CD4-positive, alpha-beta T cell (primary cell): ENCODE measurements at regions of chr2 and their contacts with region 1.

Region 1: GRCh38 chr2:148509288-148509902 is 135.2 kb upstream of the EPC2 start:
- DNase-seq: peak; percentile 74 to 90 (median 79)
- ATAC-seq: peak; percentile 100
- H3K4me3 ChIP-seq: peak overlapping the region; percentile 50
- H3K4me3 Mint-ChIP-seq: peak overlapping the region; percentile 65
- H3K27ac ChIP-seq: peak overlapping the region in 1 of 2 donors; percentile 46
- H3K27ac Mint-ChIP-seq: peak overlapping the region; percentile 77
- H3K4me1 ChIP-seq: peaks cover 7% of the 10 kb centered on the region
- H3K4me1 Mint-ChIP-seq: peaks cover 14% of the 10 kb centered on the region
- H3K27me3 ChIP-seq: no peaks in the 10 kb centered on the region
- H3K27me3 Mint-ChIP-seq: no peaks in the 10 kb centered on the region
- CTCF ChIP-seq: peak; percentile 78

Region 2: DNA sequence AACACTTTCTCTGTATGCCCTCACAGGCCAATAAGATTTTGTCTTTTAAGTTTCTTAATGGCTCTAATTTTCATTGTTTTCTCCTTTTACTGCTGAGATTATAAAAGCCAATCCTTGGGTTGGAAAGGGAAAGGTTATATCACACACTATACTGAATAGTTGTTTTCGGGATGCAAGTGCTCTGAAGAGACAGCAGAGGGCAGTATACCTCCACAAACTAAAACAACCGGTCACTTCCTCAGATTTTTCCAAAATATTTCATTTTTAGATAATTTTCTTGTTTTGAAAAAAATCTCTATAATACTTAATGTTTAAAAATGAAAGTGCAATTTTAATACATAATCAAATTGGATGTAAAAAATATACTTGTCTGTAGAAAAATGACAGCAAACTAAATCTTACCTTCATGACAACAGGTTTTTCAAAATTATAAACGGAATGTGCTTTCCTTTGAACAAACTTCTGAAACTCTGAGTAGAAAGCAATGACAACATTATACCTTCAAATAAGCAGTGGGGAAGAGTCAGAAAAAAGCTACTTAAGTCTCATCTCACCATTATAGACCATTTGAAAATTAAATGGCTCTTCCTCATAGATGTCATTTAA is 571.5 kb before region 1 on chr2:
- CTCF ChIA-PET with region 1: interaction called, 3 read pairs
- POLR2A ChIA-PET with region 1: no interaction called
- intact Hi-C with region 1: loop called (anchors 2 kb)
- DNase-seq: peak in 3 of 14 experiments; percentile 35 to 57 (median 43)
- ATAC-seq: peak; percentile 68
- H3K4me3 ChIP-seq: no peak overlapping the region
- H3K4me3 Mint-ChIP-seq: no peak overlapping the region
- H3K27ac ChIP-seq: no peak overlapping the region
- H3K27ac Mint-ChIP-seq: no peak overlapping the region
- H3K4me1 ChIP-seq: no peaks in the 10 kb centered on the region
- H3K4me1 Mint-ChIP-seq: no peaks in the 10 kb centered on the region
- H3K27me3 ChIP-seq: no peaks in the 10 kb centered on the region
- H3K27me3 Mint-ChIP-seq: no peaks in the 10 kb centered on the region
- CTCF ChIP-seq: peak; percentile 97

Region 3: DNA sequence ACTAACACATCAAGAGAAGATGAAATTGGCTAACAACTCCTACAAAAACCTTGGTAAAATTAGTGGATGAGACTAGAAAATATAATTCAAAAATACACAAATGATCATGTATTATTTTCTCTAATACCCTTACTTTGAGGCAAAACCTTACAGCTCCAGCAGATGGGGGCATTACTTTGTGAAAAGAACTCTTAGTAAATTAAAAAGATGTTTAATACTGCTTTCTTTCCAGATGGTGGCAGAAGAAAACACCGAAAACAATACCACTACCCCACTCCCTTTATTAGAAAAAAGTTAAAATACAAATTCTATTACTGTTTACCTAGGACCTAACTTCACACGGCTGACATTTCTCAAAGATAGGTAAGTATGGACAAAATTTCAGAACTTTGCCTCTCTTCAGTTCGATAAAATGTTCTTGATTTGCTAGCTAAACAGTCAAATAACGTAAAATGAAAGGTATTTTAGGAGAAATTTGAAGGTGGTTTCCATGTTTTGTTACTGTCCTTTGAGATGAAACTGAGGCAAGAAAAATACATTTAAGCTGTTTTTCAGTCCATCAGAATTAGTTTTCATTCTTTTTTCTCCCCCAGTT is 519.5 kb before region 1 on chr2:
- CTCF ChIA-PET with region 1: interaction called, 22 read pairs
- POLR2A ChIA-PET with region 1: interaction called, 8 read pairs
- intact Hi-C with region 1: loop called (anchors 1 to 2 kb)
- DNase-seq: peak in 7 of 14 experiments; percentile 5 to 73 (median 44)
- ATAC-seq: peak; percentile 95
- H3K4me3 ChIP-seq: no peak overlapping the region
- H3K4me3 Mint-ChIP-seq: no peak overlapping the region
- H3K27ac ChIP-seq: no peak overlapping the region
- H3K27ac Mint-ChIP-seq: peak overlapping the region; percentile 25
- H3K4me1 ChIP-seq: no peaks in the 10 kb centered on the region
- H3K4me1 Mint-ChIP-seq: peaks cover 38% of the 10 kb centered on the region
- H3K27me3 ChIP-seq: no peaks in the 10 kb centered on the region
- H3K27me3 Mint-ChIP-seq: no peaks in the 10 kb centered on the region
- CTCF ChIP-seq: peak; percentile 97

Region 4: DNA sequence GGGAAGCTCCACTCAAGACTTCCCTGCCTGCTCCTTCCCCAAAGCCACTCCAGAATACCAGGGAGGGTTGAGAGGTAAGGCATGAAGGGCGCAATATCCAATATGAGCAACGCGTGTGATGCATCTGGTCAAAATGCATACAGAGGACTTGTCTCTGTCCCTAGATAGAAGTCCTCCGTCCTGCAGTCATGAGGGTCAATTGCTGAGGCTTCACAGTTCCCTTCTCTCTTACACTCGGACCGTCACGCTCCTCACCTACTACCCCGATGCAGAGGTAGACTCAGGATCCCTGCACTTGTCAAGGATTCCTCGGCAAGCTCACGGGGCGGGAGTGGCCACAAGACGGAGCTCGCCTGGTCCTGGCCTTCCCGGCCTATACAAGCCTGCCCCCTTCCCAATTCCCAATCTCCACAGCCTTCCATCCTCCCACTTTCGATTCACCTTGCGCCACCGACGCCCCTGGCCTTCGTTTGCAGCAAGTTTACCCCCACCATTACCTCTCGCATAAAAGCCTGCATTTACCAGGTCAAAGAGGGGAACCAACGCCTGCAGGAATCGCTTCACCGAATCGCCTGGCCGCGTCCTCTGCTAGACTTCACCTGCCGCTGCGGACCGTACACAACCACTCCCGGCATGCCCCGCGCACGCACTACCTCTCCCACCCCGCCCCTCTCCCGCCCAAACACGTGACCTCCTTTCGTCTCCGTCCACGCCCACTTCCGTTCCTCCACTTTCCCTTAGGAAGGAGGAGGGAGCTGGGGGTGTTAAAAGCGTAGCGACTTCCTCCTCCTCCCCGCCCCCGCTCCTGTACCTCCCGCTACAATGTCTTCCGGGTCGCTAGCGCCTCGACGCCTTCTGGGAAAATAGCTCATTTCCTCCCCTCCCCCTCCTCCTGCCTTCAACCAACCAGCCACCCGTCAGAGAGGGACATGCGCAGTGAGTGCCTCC is 489.0 kb before region 1 on chr2 and contains the start of gene ORC4:
- CTCF ChIA-PET with region 1: interaction called, 7 read pairs
- POLR2A ChIA-PET with region 1: interaction called, 10 read pairs
- intact Hi-C with region 1: no loop called
- DNase-seq: peak; percentile 90 to 100 (median 97)
- ATAC-seq: peak; percentile 89
- H3K4me3 ChIP-seq: peak within 1 kb of the TSS; percentile 90
- H3K4me3 Mint-ChIP-seq: peak within 1 kb of the TSS; percentile 93
- H3K27ac ChIP-seq: peak within 1 kb of the TSS; percentile 86 to 94
- H3K27ac Mint-ChIP-seq: peak within 1 kb of the TSS; percentile 87
- H3K4me1 ChIP-seq: peaks cover 17% of the 10 kb centered on the region
- H3K4me1 Mint-ChIP-seq: peaks cover 82% of the 10 kb centered on the region
- H3K27me3 ChIP-seq: no peaks in the 10 kb centered on the region
- H3K27me3 Mint-ChIP-seq: no peaks in the 10 kb centered on the region
- CTCF ChIP-seq: no peak
- total RNA-seq, gene ORC4: 29.4 to 33.9 TPM

Region 5: GRCh38 chr2:148524519-148524919 is 15.1 kb after region 1 on chr2:
- CTCF ChIA-PET with region 1: interaction called, 25 read pairs
- POLR2A ChIA-PET with region 1: interaction called, 37 read pairs
- intact Hi-C with region 1: loop called in 1 of 2 experiments (anchors 2 kb)
- DNase-seq: peak in 13 of 14 experiments; percentile 30 to 89 (median 59)
- ATAC-seq: peak; percentile 92
- H3K4me3 ChIP-seq: no peak overlapping the region
- H3K4me3 Mint-ChIP-seq: peak overlapping the region; percentile 71
- H3K27ac ChIP-seq: peak overlapping the region; percentile 56 to 64
- H3K27ac Mint-ChIP-seq: peak overlapping the region; percentile 85
- H3K4me1 ChIP-seq: peaks cover 84% of the 10 kb centered on the region
- H3K4me1 Mint-ChIP-seq: peaks cover 90% of the 10 kb centered on the region
- H3K27me3 ChIP-seq: no peaks in the 10 kb centered on the region
- H3K27me3 Mint-ChIP-seq: no peaks in the 10 kb centered on the region
- CTCF ChIP-seq: no peak

Region 6: GRCh38 chr2:148552675-148553331 is 43.4 kb after region 1 on chr2:
- CTCF ChIA-PET with region 1: interaction called, 10 read pairs
- POLR2A ChIA-PET with region 1: interaction called, 7 read pairs
- intact Hi-C with region 1: no loop called
- DNase-seq: peak in 5 of 14 experiments; percentile 18 to 70 (median 67)
- ATAC-seq: peak; percentile 81
- H3K4me3 ChIP-seq: peak overlapping the region; percentile 57
- H3K4me3 Mint-ChIP-seq: no peak overlapping the region
- H3K27ac ChIP-seq: peak overlapping the region; percentile 46 to 65
- H3K27ac Mint-ChIP-seq: no peak overlapping the region
- H3K4me1 ChIP-seq: peaks cover 14% of the 10 kb centered on the region
- H3K4me1 Mint-ChIP-seq: no peaks in the 10 kb centered on the region
- H3K27me3 ChIP-seq: no peaks in the 10 kb centered on the region
- H3K27me3 Mint-ChIP-seq: no peaks in the 10 kb centered on the region
- CTCF ChIP-seq: no peak

Region 7: DNA sequence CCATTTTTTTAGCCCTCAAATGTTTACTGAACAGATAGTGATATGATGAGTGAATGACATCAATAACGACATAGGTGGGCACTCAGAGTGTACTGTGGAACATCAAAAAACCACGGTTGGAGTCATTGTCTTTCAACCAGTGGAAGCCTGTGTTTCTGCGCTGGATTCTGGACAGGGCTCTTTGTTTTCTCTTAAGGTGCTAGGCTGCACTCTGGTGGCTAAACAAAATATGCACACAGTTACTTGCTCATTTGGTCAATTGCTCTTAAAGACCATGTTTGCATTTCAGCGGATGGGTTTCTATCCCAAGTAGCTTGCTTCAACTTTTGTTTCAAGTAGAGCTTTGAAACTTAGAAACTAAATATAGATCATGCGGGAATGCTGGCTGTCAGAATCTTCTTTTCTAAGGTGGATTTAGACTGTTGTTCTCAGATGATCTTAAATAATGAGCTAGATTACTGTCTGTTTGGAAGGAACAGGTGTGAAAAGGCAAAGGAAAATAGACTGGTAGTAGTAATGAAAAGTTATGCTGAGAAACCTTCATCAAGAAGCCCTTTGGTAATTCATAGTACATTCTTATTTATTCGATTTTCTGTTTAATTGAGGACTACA is 480.6 kb after region 1 on chr2:
- CTCF ChIA-PET with region 1: interaction called, 4 read pairs
- POLR2A ChIA-PET with region 1: no interaction called
- intact Hi-C with region 1: loop called in 1 of 2 experiments (anchors 1 kb)
- DNase-seq: peak in 11 of 14 experiments; percentile 13 to 80 (median 37)
- ATAC-seq: peak; percentile 82
- H3K4me3 ChIP-seq: no peak overlapping the region
- H3K4me3 Mint-ChIP-seq: no peak overlapping the region
- H3K27ac ChIP-seq: no peak overlapping the region
- H3K27ac Mint-ChIP-seq: no peak overlapping the region
- H3K4me1 ChIP-seq: no peaks in the 10 kb centered on the region
- H3K4me1 Mint-ChIP-seq: no peaks in the 10 kb centered on the region
- H3K27me3 ChIP-seq: no peaks in the 10 kb centered on the region
- H3K27me3 Mint-ChIP-seq: no peaks in the 10 kb centered on the region
- CTCF ChIP-seq: peak; percentile 51